ENCODE measurements at regions of chr7 and their contacts with region 1.

Region 1: GRCh38 chr7:154676422-154677073 is 326.4 kb downstream of the PAXIP1 start:
- DNase-seq: peak; percentile 85 to 95 (median 87)
- ATAC-seq: peak; percentile 86
- H3K4me3 ChIP-seq: peak overlapping the region; percentile 25
- H3K27ac ChIP-seq: peak overlapping the region; percentile 87
- H3K4me1 ChIP-seq: peaks cover 35 to 60% of the 10 kb centered on the region in 2 experiments
- H3K27me3 ChIP-seq: no peaks in the 10 kb centered on the region
- CTCF ChIP-seq: no peak
- EP300 ChIP-seq: peak; percentile 92
- POLR2A ChIP-seq: peak; percentile 81
- RAD21 ChIP-seq: 0 out of 4 replicates have a peak, but pooled peaks of 1 of the 2 experiments have one; percentile 4

Region 2: DNA sequence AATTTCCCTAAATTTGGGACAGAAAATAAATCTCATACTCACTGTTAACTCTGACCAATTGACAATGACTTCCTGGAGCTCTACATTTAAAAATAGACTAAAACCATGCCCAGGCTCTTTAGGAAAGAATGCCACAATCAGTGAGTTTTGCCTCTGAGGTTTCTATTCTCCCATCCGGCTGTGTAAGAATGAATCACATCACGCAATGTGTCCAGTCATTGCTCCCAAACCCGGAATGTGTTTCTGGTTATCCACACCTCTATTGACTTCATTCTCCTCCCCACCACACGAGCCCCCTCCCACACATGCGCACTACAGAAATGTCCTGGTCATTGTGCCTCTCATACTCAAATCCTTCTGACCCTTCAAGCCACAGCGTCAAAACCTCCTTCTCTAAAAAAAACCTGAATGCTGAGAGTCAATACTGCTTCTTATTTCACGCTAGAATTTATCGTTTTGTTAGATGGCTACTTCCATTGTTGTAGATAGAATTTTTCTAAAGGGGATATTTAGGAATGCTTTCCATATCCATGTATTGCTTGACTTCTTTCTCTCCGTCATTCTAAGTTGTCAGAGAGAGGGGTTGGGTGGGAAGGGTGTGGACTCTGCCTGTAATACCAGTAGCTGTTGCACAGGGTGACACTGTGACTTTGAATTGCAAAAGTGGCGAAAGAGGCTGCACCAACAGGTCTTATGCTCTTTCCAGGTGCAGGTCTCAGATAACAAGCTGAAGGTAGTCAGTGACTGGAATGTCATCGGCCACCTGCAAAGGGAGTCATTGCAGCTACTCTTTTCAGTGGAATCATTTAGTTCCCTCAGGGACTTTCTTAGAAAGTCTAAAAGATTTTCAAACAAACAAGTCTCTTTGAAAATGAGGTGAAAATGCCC is 30.2 kb before region 1 on chr7:
- CTCF ChIA-PET with region 1: no interaction called
- POLR2A ChIA-PET with region 1: no interaction called
- in situ Hi-C with region 1: no loop called
- intact Hi-C with region 1: loop called (anchors 2 kb)
- DNase-seq: peak; percentile 37 to 68 (median 58)
- ATAC-seq: peak; percentile 79
- H3K4me3 ChIP-seq: no peak overlapping the region
- H3K27ac ChIP-seq: no peak overlapping the region
- H3K4me1 ChIP-seq: peaks cover 0 to 16% of the 10 kb centered on the region in 2 experiments; a peak in 1 of 5 replicates
- H3K27me3 ChIP-seq: peaks cover 10 to 34% of the 10 kb centered on the region in 2 experiments
- CTCF ChIP-seq: no peak
- EP300 ChIP-seq: peak; percentile 37; the same call in 1 of the 2 replicates
- POLR2A ChIP-seq: no peak
- RAD21 ChIP-seq: no peak

Measured in K562 (cell line).